Activated B cell treated with CpG ODN at 0.5 μM for 24 hours (primary cell): ENCODE measurements at regions of chr11 and their contacts with region 1.

Region 1: DNA sequence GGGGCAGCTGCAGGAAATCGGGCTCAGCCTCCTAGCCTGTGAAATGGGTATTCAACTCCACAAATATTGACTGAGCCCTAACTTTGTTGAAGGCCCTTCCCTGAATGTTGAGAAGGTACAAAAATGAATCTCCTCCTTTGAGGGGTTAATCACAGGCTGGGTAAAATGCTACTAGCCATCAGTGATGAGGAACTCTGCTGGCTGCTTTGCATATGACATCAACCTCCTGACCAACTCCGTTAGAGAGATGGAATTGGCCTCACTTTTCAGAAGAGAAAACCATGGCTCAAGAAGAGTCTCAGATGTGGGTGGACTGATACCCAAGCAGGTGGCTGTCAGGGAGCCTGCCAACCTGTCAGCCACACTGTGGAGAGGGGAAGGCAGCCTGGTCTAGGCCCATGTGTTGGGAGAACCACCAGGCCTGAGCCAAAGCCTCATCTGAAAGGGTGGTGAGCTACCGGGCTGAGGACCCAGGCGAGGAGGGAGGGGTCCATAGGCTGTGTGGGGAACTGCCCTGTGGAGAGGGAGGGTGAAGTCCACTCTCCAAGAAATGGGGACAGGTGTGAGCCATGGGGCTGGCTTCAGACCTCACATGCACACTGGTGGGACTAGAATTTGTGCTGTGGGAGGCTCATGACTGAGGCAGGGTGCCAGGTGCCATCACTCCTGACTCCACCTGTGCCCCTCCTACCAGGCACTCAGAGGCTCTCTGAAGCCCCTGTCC is 11.8 kb downstream of the CDCA5 start:
- DNase-seq: no peak
- ATAC-seq: no peak
- H3K4me3 Mint-ChIP-seq: no peak overlapping the region
- H3K27ac Mint-ChIP-seq: no peak overlapping the region
- H3K4me1 Mint-ChIP-seq: peaks cover 4% of the 10 kb centered on the region
- H3K27me3 Mint-ChIP-seq: no peaks in the 10 kb centered on the region
- CTCF ChIP-seq: no peak

Region 2: DNA sequence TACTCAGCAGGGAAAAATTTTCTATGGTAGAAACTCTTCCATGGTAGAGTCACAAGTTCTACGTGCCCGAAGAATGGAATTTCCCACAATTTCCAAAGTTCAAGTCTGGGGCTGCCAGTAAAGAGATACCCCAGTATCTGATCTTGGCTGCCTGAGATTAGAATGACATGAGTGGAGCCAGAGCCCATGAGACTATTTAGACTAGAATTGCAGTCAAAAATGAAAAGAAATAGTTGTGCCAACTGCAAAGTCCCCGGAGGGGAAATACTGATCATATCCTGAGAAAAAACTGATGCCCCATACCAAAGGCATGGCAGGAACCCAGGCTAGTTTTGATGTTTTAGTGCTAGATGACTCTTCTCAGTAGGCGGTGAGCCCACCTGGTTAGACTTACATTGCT is 111.3 kb before region 1 on chr11:
- CTCF ChIA-PET with region 1: no interaction called
- POLR2A ChIA-PET with region 1: interaction called, 10 read pairs
- intact Hi-C with region 1: no loop called
- DNase-seq: no peak
- ATAC-seq: no peak
- H3K4me3 Mint-ChIP-seq: no peak overlapping the region
- H3K27ac Mint-ChIP-seq: no peak overlapping the region
- H3K4me1 Mint-ChIP-seq: peaks cover 6% of the 10 kb centered on the region
- H3K27me3 Mint-ChIP-seq: peaks cover 2% of the 10 kb centered on the region
- CTCF ChIP-seq: no peak